ENCODE measurements at regions of chr17 and their contacts with region 1.

Region 1: DNA sequence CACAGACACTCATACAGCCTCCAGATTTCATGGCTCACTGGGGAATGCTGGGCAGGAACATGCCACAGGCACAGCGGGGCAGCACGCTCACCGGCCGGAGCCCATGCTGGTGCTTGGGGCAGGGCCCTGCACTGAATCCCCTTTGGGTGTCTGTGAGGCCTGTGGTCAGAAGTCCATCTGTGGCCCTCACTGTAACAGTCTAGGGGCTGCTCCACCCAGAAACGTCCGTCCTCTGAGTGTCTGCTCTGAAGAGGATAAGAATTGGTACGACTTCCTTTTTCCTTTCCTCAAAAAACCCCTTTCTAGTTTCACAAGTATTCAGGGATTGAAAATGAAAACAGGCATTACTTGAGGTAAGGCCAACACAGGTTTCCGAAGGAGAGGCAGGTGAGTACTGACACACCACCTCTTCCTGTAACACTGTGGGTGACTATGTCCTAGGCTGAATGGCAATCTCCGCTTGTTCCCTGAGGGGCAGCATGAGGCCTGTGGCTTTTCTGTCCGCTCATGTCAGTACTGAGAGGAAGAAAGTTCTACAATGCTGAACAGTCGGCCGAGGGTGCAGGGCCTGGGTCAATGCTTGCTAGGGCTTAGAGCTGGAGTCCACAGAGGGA is 42.5 kb downstream of the TMEM11 start:
- DNase-seq: no peak
- H3K4me3 ChIP-seq: no peak overlapping the region
- H3K27ac ChIP-seq: no peak overlapping the region
- H3K4me1 ChIP-seq: peaks cover 6% of the 10 kb centered on the region
- H3K27me3 ChIP-seq: no peaks in the 10 kb centered on the region
- CTCF ChIP-seq: no peak

Region 2: DNA sequence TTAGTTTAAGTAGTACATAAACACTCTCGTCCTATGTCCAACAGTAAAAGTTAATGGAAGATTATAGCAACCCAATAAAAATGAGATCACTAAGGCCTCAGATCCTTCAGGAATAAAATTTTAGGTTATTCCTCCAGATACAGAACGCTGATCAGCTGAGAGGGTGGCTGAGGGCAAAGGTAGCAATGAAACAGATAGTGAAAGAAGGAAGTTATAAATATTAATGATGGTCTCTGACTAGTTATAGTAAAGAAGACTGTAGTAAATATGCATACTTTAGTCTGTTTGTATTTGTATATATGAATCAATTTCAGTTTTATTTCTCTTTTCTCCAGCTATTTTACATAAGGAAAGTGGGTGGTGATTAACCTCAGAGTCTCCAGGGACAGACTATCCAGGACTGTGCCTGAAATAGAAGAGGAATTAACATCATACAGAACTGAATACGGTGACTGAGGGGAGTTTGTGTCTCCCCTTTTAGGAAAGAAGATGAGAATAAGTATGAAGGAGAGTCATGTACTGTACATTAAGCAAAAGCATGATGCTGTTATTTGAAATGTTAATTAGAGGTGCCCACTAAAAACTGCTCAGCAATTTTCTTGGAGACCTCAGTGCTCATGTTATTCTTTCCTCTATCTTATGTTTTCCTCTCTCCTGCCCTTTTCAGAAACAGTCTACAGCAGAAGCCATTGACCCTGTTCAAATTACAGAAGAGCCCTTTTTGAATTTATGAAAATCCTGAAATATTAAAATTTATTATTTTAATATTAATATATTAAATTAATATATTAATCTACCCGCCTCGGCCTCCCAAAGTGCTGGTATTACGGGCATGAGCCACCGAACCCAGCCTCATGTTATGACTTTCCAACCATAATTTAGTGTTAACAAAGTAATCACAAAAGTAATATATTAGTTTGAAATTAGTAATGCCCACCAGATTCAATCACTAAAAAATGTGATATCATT is 81.2 kb before region 1 on chr17:
- CTCF ChIA-PET with region 1: no interaction called
- dilution Hi-C with region 1: loop called (anchors 5 kb)
- in situ Hi-C with region 1: no loop called
- intact Hi-C with region 1: no loop called
- DNase-seq: no peak
- H3K4me3 ChIP-seq: no peak overlapping the region
- H3K27ac ChIP-seq: no peak overlapping the region
- H3K4me1 ChIP-seq: peaks cover 3% of the 10 kb centered on the region
- H3K27me3 ChIP-seq: no peaks in the 10 kb centered on the region
- CTCF ChIP-seq: no peak

Region 3: GRCh38 chr17:21132428-21132827 is 39.0 kb before region 1 on chr17:
- CTCF ChIA-PET with region 1: no interaction called
- dilution Hi-C with region 1: loop called (anchors 5 kb)
- in situ Hi-C with region 1: no loop called
- intact Hi-C with region 1: no loop called
- DNase-seq: no peak
- H3K4me3 ChIP-seq: no peak overlapping the region
- H3K27ac ChIP-seq: no peak overlapping the region
- H3K4me1 ChIP-seq: peaks cover 9% of the 10 kb centered on the region
- H3K27me3 ChIP-seq: no peaks in the 10 kb centered on the region
- CTCF ChIP-seq: no peak

Region 4: DNA sequence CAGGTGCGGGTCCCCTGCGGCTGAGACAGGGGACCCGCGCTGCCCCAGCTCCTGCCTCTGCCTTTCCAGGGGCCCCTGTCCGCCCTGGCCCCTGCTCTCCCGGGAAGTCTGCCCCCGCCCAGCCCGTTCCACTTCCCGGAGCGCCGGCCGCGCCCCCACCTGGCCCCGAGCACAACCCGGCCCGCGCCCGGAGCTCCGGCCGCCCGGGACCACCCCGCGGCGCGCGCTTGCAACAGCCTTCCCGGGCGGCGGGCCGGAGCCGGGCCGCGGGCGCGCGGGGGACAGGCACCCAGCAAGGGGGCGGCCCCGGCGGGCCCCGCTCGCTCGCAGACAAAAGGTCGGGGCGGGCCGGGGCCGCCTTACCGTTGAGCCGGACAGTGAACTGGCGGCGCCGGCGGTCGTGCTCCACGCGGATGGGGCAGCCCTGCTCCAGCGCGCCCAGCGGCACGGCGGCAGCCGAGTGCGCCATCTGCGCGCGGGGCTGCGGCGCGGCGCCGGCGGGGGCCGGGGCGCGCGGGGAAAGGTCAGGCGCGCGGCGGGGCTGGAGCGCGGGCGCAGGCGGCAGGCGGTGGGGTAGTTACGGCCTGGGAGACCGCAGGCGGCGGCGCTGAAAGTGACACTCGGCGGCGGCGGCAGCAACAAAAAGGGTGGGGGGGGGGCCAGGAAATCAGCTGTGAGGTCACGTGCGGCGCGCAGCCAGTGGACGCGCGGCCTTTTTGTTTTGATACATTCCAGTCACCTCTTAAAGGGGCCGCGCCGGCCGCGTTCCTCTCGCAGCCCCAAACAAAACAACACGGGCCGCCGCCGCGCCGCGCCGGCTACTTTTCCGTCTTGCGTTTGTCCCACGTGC is 81.6 kb after region 1 on chr17 and contains the start of gene NATD1:
- CTCF ChIA-PET with region 1: no interaction called
- dilution Hi-C with region 1: no loop called
- in situ Hi-C with region 1: no loop called
- intact Hi-C with region 1: no loop called
- DNase-seq: peak; percentile 73
- H3K4me3 ChIP-seq: peak within 1 kb of the TSS; percentile 53 to 62 (median 56)
- H3K27ac ChIP-seq: peak within 1 kb of the TSS; percentile 30
- H3K4me1 ChIP-seq: peaks cover 26% of the 10 kb centered on the region
- H3K27me3 ChIP-seq: no peaks in the 10 kb centered on the region
- CTCF ChIP-seq: no peak
- total RNA-seq, gene NATD1: 6.1 to 10.8 TPM